Common myeloid progenitor, CD34-positive (primary cell): ENCODE measurements at regions of chr7 and their contacts with region 1.

Region 1: GRCh38 chr7:101138213-101138870 is 11.4 kb downstream of the SERPINE1 start:
- DNase-seq: peak; percentile 98 to 99 (median 99)
- H3K4me3 ChIP-seq: peak overlapping the region in 4 of 7 experiments; percentile 26 to 69 (median 55)
- H3K27ac ChIP-seq: peak overlapping the region; percentile 61 to 84
- H3K4me1 ChIP-seq: peaks cover 0 to 44% (median 21%) of the 10 kb centered on the region in 4 experiments
- H3K27me3 ChIP-seq: peaks cover 0 to 15% (median 2%) of the 10 kb centered on the region in 5 experiments

Region 2: GRCh38 chr7:100957832-100958421 is 180.4 kb before region 1 on chr7:
- CTCF ChIA-PET with region 1: no interaction called
- POLR2A ChIA-PET with region 1: no interaction called
- DNase-seq: no peak
- H3K4me3 ChIP-seq: no peak overlapping the region
- H3K27ac ChIP-seq: no peak overlapping the region
- H3K4me1 ChIP-seq: no peaks in the 10 kb centered on the region
- H3K27me3 ChIP-seq: peaks cover 0 to 78% (median 13%) of the 10 kb centered on the region in 5 experiments

Region 3: GRCh38 chr7:101094416-101095375 is 43.6 kb before region 1 on chr7:
- CTCF ChIA-PET with region 1: interaction called, 15 read pairs
- POLR2A ChIA-PET with region 1: no interaction called
- DNase-seq: peak; percentile 30 to 52 (median 38)
- H3K4me3 ChIP-seq: no peak overlapping the region
- H3K27ac ChIP-seq: no peak overlapping the region
- H3K4me1 ChIP-seq: peaks cover 0 to 6% (median 6%) of the 10 kb centered on the region in 4 experiments
- H3K27me3 ChIP-seq: no peaks in the 10 kb centered on the region

Region 4: DNA sequence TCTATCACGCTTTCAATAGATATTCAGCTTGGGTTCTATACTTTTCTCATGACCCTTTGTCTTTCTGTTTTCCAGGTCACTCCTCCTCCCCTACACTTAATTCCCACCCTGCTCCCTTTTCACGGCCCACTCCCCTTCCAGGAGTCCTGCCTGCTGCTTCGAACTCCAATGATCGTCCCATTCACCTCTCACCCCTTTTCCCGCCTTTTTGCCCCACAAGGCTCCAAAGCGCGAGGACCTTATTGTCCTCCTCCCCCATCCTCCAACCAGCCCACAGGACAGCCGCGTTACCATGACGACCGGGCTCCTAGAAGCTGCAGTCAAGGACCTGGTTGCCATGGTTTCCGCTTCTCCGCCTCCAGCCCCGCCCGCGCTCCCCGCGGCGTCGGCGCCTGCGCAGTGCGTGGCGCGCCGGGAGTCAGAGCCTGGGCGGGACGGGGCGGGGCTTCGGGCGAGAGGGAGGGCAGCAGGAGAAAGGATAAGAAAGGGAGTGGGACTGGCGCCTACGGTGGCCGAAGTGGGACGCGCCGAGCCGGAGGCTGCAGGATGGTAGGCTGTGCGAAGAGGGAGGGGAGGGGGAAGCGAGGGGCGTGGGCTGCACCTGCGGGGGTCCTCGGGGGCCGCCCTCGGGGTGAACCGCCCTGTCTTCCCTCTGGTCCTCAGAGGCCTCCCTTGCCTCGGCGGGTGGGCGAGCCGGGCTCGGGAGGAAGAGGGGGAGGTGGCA is 15.8 kb after region 1 on chr7 and contains the start of gene AP1S1:
- CTCF ChIA-PET with region 1: interaction called, 14 read pairs
- POLR2A ChIA-PET with region 1: no interaction called
- DNase-seq: peak; percentile 87 to 90 (median 89)
- H3K4me3 ChIP-seq: peak within 1 kb of the TSS; percentile 41 to 80 (median 66)
- H3K27ac ChIP-seq: peak within 1 kb of the TSS in 1 of 2 experiments; percentile 25
- H3K4me1 ChIP-seq: peaks cover 0 to 11% (median 8%) of the 10 kb centered on the region in 4 experiments
- H3K27me3 ChIP-seq: peaks cover 0 to 9% (median 2%) of the 10 kb centered on the region in 5 experiments

Region 5: GRCh38 chr7:101197991-101198390 is 59.6 kb after region 1 on chr7:
- CTCF ChIA-PET with region 1: interaction called, 76 read pairs
- POLR2A ChIA-PET with region 1: no interaction called
- DNase-seq: no peak
- H3K4me3 ChIP-seq: no peak overlapping the region
- H3K27ac ChIP-seq: no peak overlapping the region
- H3K4me1 ChIP-seq: peaks cover 0 to 8% (median 6%) of the 10 kb centered on the region in 4 experiments
- H3K27me3 ChIP-seq: peaks cover 0 to 47% (median 19%) of the 10 kb centered on the region in 5 experiments

Region 6: GRCh38 chr7:101287032-101287431 is 148.7 kb after region 1 on chr7:
- CTCF ChIA-PET with region 1: interaction called, 47 read pairs
- POLR2A ChIA-PET with region 1: no interaction called
- DNase-seq: no peak
- H3K4me3 ChIP-seq: no peak overlapping the region
- H3K27ac ChIP-seq: no peak overlapping the region
- H3K4me1 ChIP-seq: peaks cover 0 to 16% (median 9%) of the 10 kb centered on the region in 4 experiments
- H3K27me3 ChIP-seq: peaks cover 0 to 13% (median 4%) of the 10 kb centered on the region in 5 experiments